A549 (cell line): ENCODE measurements at regions of chr16 and their contacts with region 1.

Region 1: GRCh38 chr16:77236063-77236511 is 36.9 kb downstream of the SYCE1L start:
- DNase-seq: peak; percentile 60 to 84
- ATAC-seq: peak; percentile 94 to 97
- H3K4me3 ChIP-seq: no peak overlapping the region
- H3K27ac ChIP-seq: peak overlapping the region; percentile 57 to 68; a peak in 4 of 6 replicates
- H3K4me1 ChIP-seq: peaks cover 9% of the 10 kb centered on the region; the same call in 2 of the 3 replicates
- CTCF ChIP-seq: peak; percentile 100
- EP300 ChIP-seq: no peak
- POLR2A ChIP-seq: no peak
- RAD21 ChIP-seq: peak; percentile 100

Region 2: DNA sequence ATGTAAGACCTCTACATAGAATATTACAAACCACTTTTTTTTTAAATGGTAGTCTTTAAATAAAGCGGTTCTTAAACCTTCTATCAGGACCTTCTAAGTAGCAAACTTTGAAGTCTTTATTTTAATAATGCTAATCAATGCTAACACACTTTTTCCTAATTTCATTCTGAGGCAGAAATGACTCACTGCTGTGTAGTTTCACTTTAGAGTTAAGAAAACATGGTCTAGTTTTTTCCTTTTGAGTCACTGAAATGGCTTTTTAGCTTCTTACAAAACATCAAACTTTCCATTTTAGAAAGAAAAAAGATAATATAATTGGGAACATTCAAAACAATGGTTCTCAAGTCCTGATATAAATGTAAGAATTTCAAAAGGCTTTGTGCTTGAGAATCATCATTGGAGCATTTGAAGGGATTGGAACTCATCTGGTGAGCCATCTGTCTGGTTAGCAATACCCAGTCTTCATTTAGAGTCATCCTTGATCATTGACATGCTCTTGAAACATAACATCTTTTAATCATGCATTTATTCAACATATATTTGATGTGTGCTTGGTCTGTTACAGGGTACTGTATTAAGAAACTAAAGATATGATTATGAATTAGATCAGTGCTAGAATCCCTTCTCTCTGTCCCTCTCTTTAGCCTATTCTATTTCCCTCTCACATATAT is 303.4 kb before region 1 on chr16:
- CTCF ChIA-PET with region 1: no interaction called
- POLR2A ChIA-PET with region 1: no interaction called
- DNase-seq: no peak
- ATAC-seq: no peak
- H3K4me3 ChIP-seq: no peak overlapping the region
- H3K27ac ChIP-seq: no peak overlapping the region
- H3K4me1 ChIP-seq: peaks cover 5% of the 10 kb centered on the region; the same call in 1 of the 3 replicates
- CTCF ChIP-seq: no peak
- EP300 ChIP-seq: no peak
- POLR2A ChIP-seq: no peak
- RAD21 ChIP-seq: no peak

Region 3: GRCh38 chr16:77223184-77223583 is 12.9 kb before region 1 on chr16:
- CTCF ChIA-PET with region 1: interaction called, 11 read pairs
- POLR2A ChIA-PET with region 1: no interaction called
- DNase-seq: peak in 1 of 2 experiments; percentile 27
- ATAC-seq: no peak
- H3K4me3 ChIP-seq: no peak overlapping the region
- H3K27ac ChIP-seq: no peak overlapping the region
- H3K4me1 ChIP-seq: peaks cover 43% of the 10 kb centered on the region
- CTCF ChIP-seq: peak; percentile 24; the same call in 2 of the 3 replicates
- EP300 ChIP-seq: no peak
- POLR2A ChIP-seq: no peak
- RAD21 ChIP-seq: peak in 1 of 2 experiments; percentile 24; a peak in 2 of 5 replicates

Region 4: GRCh38 chr16:77289331-77289809 is 53.3 kb after region 1 on chr16:
- CTCF ChIA-PET with region 1: interaction called, 31 read pairs
- POLR2A ChIA-PET with region 1: no interaction called
- DNase-seq: peak; percentile 20 to 88
- ATAC-seq: peak; percentile 86 to 90
- H3K4me3 ChIP-seq: no peak overlapping the region
- H3K27ac ChIP-seq: peak overlapping the region; percentile 71 to 85
- H3K4me1 ChIP-seq: peaks cover 38% of the 10 kb centered on the region
- CTCF ChIP-seq: no peak
- EP300 ChIP-seq: peak; percentile 58 to 71; a peak in 4 of 5 replicates
- POLR2A ChIP-seq: no peak
- RAD21 ChIP-seq: peak in 1 of 2 experiments; percentile 34; a peak in 2 of 5 replicates

Region 5: DNA sequence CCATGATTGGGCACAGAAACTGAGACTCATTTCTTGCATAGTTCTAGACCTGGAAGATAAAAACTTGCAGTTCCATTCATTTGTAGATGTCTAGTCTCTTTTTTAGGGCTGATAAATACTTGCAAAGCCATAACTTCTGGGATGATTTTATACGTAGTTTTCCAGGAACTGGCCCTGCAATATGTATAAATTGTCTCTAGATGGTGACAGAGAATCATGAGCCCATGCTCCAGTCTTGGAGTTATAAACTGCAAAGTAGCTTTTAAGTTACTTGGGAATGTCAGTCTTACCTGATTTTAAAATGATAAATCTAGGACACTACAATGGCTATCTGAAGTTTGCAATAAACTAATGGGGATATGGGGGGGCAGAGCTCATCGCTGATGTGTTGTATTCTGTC is 201.8 kb after region 1 on chr16:
- CTCF ChIA-PET with region 1: interaction called, 21 read pairs
- POLR2A ChIA-PET with region 1: no interaction called
- DNase-seq: peak in 1 of 2 experiments; percentile 29
- ATAC-seq: no peak
- H3K4me3 ChIP-seq: no peak overlapping the region
- H3K27ac ChIP-seq: no peak overlapping the region
- H3K4me1 ChIP-seq: peaks cover 11% of the 10 kb centered on the region
- CTCF ChIP-seq: peak; percentile 23; the same call in 2 of the 3 replicates
- EP300 ChIP-seq: no peak
- POLR2A ChIP-seq: no peak
- RAD21 ChIP-seq: peak; percentile 30 to 50; a peak in 4 of 5 replicates

Region 6: GRCh38 chr16:77574867-77575624 is 339.0 kb after region 1 on chr16:
- CTCF ChIA-PET with region 1: interaction called, 475 read pairs
- POLR2A ChIA-PET with region 1: no interaction called
- DNase-seq: no peak
- ATAC-seq: no peak
- H3K4me3 ChIP-seq: no peak overlapping the region
- H3K27ac ChIP-seq: no peak overlapping the region
- H3K4me1 ChIP-seq: peaks cover 19% of the 10 kb centered on the region
- CTCF ChIP-seq: no peak
- EP300 ChIP-seq: no peak
- POLR2A ChIP-seq: no peak
- RAD21 ChIP-seq: no peak

Region 7: DNA sequence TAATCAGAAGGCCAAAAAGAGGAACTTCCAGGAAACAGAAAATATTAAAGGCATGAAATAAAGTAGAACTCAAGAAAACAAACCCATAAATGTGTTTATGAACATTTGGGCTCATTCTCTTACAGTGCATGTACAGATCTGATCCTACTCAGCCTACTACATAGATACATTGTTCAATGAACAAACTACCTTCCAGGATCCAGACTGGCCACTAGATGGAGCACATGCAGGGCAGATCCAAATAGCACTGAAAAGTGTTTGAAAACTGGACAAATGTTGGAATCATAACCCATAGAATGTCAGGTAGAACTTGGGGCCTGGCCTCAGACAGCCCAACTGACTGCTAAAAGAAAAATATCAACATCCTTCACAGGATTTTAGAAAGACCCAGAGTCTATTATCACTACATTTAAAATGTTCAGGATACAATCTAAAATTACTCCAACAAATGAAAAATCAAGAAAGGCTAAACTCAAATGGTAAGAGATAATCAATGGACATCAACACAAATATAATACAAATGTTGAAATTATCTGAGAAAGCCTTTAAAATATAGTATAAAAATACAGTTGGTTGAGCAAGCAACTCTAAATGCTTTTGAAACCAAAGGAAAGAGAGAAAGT is 363.8 kb after region 1 on chr16:
- CTCF ChIA-PET with region 1: interaction called, 11 read pairs
- POLR2A ChIA-PET with region 1: no interaction called
- DNase-seq: peak; percentile 54 to 56
- ATAC-seq: peak; percentile 66 to 84; a peak in 3 of 6 replicates
- H3K4me3 ChIP-seq: no peak overlapping the region
- H3K27ac ChIP-seq: no peak overlapping the region
- H3K4me1 ChIP-seq: no peaks in the 10 kb centered on the region
- CTCF ChIP-seq: peak; percentile 67
- EP300 ChIP-seq: no peak
- POLR2A ChIP-seq: no peak
- RAD21 ChIP-seq: peak; percentile 49 to 65; a peak in 4 of 5 replicates